ENCODE measurements at regions of chr3 and their contacts with region 1.

Region 1: DNA sequence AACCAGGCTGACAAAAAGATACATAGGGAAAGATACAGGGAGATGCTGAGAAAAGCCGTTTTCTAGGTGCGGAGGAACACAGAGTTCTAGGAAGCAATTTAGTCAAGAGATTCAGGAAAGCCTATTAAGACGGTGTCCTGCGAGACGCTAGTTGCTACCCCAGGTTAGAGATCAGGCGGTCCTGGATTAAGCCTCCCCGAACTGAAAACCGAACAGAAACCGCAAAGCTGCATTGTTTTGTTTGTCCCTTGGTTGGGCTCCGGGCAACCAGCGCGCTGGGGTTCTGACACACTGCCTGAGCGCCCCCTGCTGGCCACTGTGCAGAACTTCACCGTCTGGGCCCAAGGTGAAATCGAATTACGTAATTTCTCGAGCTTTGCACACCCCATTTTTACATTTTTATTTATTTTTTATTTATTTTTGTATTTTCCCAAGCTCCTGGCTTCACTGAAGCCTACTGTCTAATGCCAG is 37.3 kb upstream of the NDUFB4 start:
- DNase-seq: peak; percentile 97 to 98 (median 98)
- H3K4me3 ChIP-seq: peak overlapping the region; percentile 8 to 77 (median 63)
- H3K27ac ChIP-seq: peak overlapping the region; percentile 92 to 96
- H3K4me1 ChIP-seq: peaks cover 4 to 26% (median 22%) of the 10 kb centered on the region in 4 experiments
- H3K27me3 ChIP-seq: no peaks in the 10 kb centered on the region

Region 2: DNA sequence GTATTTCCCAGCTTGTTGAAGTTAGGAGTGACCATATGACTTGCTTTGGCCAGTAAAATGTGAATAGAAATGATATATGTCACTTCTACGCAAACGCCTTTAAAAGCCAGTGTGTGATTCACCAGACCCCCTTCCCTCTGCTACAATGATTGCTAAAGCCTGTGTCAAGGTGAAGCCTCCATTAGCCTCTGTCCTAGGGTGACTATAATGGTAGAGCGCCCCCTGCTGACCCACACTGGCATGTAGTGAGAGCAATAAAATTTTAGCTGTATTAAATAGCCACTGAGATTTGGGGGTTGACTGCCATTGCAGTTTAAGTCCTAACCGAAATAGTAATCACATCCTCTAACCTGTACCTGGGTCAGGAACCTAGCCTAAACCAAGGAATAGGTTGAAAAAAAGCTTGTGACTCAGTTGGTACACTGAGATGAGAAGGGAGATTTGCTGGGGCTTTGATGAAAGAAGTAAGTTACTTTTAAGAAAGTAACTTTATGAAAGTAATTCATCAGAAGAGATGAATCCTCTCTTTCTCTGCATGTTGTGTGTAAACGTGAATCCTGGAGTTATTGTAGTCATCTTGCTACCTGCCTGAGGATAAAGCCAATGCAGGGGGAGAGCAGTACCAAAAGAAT is 236.3 kb after region 1 on chr3:
- CTCF ChIA-PET with region 1: interaction called, 62 read pairs
- POLR2A ChIA-PET with region 1: no interaction called
- DNase-seq: peak; percentile 78 to 91 (median 85)
- H3K4me3 ChIP-seq: no peak overlapping the region
- H3K27ac ChIP-seq: no peak overlapping the region
- H3K4me1 ChIP-seq: no peaks in the 10 kb centered on the region
- H3K27me3 ChIP-seq: peaks cover 0 to 40% (median 8%) of the 10 kb centered on the region in 5 experiments

Measured in common myeloid progenitor, CD34-positive (primary cell).